HEK293 (cell line): ENCODE measurements at regions of chr12 and their contacts with region 1.

Region 1: GRCh38 chr12:3073438-3074250 is 3.5 kb upstream of the TSPAN9 start:
- H3K4me3 ChIP-seq: no peak overlapping the region
- H3K27ac ChIP-seq: no peak overlapping the region
- H3K4me1 ChIP-seq: peaks cover 2% of the 10 kb centered on the region; the same call in 1 of the 2 replicates
- CTCF ChIP-seq: peak; percentile 87

Region 2: GRCh38 chr12:2877047-2877952 is 196.3 kb before region 1 on chr12 and contains the starts of genes FOXM1 and RHNO1:
- CTCF ChIA-PET with region 1: no interaction called
- POLR2A ChIA-PET with region 1: no interaction called
- H3K4me3 ChIP-seq: peak within 1 kb of the TSS; percentile 95
- H3K27ac ChIP-seq: peak within 1 kb of the TSS; percentile 94
- H3K4me1 ChIP-seq: peaks cover 13% of the 10 kb centered on the region
- CTCF ChIP-seq: no peak; the same call in none of the 2 replicates

Region 3: DNA sequence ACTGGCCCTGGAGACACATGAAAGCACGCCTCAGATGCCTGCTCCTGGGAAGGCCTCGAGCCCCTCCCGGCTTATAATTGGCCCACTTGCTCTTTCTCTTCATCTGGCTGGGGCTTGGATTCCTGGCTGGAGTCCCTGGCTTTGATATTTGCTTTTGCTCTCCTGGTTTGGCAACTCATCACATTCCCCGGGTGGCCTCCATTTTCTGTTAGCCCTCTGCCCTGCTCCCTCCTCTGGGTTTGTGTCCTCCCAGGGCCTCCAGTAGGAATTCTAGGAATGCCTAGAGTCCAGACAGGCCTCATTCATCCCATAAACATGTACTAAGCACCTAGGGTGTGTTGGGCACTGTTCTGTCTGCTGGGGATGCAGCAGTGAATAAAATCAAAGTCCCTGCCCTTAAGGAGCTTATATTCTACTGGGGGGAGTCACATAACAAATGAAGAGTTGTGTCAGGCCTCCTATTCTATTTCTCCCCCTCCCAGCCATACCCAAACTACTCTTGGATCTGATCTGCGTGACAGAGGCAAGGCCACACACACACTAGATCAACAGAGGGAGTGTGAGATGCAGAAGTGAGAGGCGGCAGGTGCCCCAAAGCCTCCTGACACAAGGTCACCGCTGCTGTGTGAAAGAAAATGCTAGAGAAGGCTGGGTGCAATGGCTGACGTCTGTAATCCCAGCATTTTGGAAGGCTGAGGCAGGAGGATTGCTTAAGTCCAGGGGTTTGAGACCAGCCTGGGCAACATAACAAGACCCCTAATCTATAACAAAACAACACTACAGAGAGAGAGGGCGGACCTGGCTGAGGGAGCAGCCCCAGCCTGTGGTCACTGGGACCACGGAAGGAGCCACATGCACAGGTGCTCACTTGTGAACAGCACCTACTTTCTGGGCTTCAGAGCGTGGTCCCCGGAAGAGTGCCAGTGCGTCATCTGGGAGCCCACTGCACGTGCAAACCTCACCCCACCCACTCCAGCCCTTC is 17.6 kb before region 1 on chr12:
- CTCF ChIA-PET with region 1: interaction called, 17 read pairs
- POLR2A ChIA-PET with region 1: no interaction called
- H3K4me3 ChIP-seq: no peak overlapping the region
- H3K27ac ChIP-seq: no peak overlapping the region
- H3K4me1 ChIP-seq: no peaks in the 10 kb centered on the region
- CTCF ChIP-seq: no peak

Region 4: DNA sequence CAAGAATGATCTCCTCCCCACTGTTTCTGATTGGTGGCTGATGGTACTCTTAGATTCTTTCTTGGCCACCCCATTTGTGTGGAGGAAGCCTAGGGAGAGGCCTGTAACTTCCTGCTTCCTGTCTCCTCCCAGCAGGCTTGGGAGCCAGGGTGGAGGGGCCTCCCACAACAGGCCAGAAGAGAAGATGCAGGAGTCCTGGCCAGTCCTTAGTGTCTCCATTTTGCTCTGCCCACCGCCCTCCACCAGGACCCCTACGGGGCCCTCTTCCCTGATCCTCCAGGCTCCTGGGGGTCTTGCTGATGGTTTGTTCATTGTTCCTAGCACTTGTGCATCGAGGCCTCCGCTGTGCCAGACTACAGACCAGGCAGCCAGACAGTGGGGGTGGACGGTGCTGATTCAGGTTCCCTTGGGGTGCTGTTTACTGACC is 10.3 kb after region 1 on chr12:
- CTCF ChIA-PET with region 1: interaction called, 13 read pairs
- POLR2A ChIA-PET with region 1: no interaction called
- H3K4me3 ChIP-seq: no peak overlapping the region
- H3K27ac ChIP-seq: no peak overlapping the region
- H3K4me1 ChIP-seq: no peaks in the 10 kb centered on the region
- CTCF ChIP-seq: no peak

Region 5: DNA sequence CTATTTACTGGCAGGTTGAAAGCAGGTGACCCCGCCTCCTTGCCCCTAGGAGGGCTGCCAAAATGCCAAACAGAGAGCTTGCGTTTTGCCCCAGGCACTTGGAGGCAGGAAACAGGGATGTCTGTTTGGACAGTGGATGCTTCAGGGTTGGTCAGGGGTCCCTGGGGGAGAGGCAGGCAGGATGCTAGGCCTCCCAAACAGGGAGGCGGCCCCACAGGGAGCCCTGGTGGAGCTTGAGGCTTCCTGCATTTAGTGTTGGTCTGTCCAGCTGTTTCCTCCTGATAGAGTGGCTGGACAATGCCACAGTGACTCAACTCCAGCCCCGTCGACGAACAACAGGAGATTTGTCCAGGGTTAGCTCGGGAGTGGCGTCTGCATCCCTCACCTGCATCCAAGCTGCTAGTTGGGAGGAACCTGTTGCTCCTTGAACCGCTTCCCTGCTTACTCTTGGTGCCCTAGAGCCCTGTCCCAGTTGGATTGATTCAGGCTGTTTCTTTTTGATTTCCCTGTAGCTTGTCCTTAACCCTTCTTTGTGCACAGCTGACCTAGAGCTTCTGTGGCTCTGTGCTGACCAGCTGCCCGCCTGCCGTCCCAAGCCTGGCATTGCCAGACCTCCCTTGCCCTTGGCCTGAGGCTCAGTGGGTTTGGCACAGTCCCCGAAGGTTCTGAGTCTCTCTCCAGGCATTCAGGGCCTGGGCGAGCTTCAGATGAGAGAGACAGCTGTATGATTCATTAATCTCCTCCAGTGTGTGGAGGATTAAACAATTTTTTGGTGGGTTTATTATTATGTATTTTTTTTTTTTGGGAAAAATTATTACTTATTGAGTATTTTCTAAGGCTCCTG is 49.4 kb after region 1 on chr12:
- CTCF ChIA-PET with region 1: interaction called, 10 read pairs
- POLR2A ChIA-PET with region 1: no interaction called
- H3K4me3 ChIP-seq: no peak overlapping the region
- H3K27ac ChIP-seq: no peak overlapping the region
- H3K4me1 ChIP-seq: no peaks in the 10 kb centered on the region
- CTCF ChIP-seq: no peak

Region 6: GRCh38 chr12:3135522-3136461 is 62.1 kb after region 1 on chr12:
- CTCF ChIA-PET with region 1: interaction called, 21 read pairs
- POLR2A ChIA-PET with region 1: no interaction called
- H3K4me3 ChIP-seq: no peak overlapping the region
- H3K27ac ChIP-seq: no peak overlapping the region
- H3K4me1 ChIP-seq: no peaks in the 10 kb centered on the region
- CTCF ChIP-seq: peak; percentile 75